IMR-90 (cell line): ENCODE measurements at regions of chr13 and their contacts with region 1.

Region 1: GRCh38 chr13:31945202-31945978 is 86.2 kb upstream of the FRY start:
- DNase-seq: peak; percentile 81
- ATAC-seq: peak; percentile 67
- H3K4me3 ChIP-seq: peak overlapping the region; percentile 7; the same call in 1 of the 2 replicates
- H3K27ac ChIP-seq: peak overlapping the region; percentile 75; the same call in 1 of the 2 replicates
- H3K4me1 ChIP-seq: peaks cover 20% of the 10 kb centered on the region
- H3K27me3 ChIP-seq: no peaks in the 10 kb centered on the region
- CTCF ChIP-seq: no peak
- POLR2A ChIP-seq: no peak
- RAD21 ChIP-seq: no peak

Region 2: DNA sequence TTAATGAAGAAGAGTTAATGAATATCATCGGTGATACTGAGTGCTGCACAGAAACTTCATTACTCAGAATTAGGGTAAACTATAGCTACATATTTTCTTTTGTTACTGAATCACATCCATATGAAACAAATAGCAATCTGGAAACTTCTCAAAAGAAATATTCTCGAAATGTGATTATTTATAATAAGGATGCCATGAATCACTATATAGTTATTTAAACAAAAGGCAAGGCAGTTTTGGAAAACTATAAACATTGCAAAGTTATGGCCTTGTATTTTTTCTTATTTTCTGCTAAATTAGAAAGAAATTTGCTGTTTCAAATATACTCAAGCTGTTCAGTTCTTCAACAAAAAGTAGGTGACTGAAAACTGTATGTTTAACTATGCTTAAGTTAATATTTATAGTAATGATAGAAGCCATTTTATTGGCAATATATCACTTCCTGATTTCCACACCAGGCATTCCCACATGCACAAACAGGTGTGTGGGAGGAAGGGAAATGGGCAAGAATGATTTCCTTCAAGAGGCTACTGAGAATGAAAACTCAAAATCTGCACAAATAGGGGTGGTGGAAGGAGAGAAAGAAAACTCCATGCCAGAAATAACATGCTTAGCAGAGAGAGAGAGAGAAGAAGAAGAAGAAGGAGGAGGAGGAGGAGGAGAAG is 11.7 kb after region 1 on chr13:
- CTCF ChIA-PET with region 1: interaction called, 13 read pairs
- POLR2A ChIA-PET with region 1: no interaction called
- dilution Hi-C with region 1: no loop called
- in situ Hi-C with region 1: no loop called
- intact Hi-C with region 1: no loop called
- DNase-seq: peak; percentile 65
- ATAC-seq: peak; percentile 81
- H3K4me3 ChIP-seq: no peak overlapping the region
- H3K27ac ChIP-seq: peak overlapping the region; percentile 88; the same call in 1 of the 2 replicates
- H3K4me1 ChIP-seq: peaks cover 6% of the 10 kb centered on the region; the same call in 1 of the 2 replicates
- H3K27me3 ChIP-seq: no peaks in the 10 kb centered on the region
- CTCF ChIP-seq: no peak
- POLR2A ChIP-seq: no peak
- RAD21 ChIP-seq: no peak

Region 3: DNA sequence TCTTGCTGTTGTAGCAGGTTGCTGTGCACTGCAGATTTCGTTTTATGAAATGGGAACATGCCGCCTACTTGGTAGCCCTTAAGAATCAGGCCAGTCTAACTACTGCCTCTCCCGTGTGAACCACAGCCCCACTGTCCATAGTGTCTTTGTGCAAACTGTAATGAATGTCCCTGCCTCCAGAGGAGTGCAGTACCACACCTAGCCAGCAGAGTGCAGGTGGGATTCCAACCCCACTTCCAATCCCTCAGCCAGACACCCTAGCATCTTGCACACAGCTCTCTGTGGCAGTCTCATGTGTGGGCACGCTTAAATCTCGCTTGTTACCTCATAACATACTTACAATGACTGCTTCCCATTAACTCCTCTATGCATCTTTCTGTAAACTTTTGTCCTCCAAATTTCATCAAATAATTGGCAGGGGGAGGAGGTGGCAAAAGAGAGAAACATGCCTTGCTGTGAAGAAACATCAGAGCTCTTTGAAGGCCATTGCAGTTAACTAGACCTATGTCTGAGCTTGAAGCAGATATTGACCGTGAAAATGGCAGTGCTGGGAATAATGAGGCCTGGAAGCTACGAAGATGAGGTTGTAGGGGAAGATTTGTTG is 322.5 kb after region 1 on chr13:
- CTCF ChIA-PET with region 1: no interaction called
- POLR2A ChIA-PET with region 1: no interaction called
- dilution Hi-C with region 1: no loop called
- in situ Hi-C with region 1: no loop called
- intact Hi-C with region 1: no loop called
- DNase-seq: no peak
- ATAC-seq: 0 out of 2 replicates have a peak, but pooled peaks have one; percentile 24
- H3K4me3 ChIP-seq: no peak overlapping the region
- H3K27ac ChIP-seq: no peak overlapping the region
- H3K4me1 ChIP-seq: peaks cover 4% of the 10 kb centered on the region; the same call in 1 of the 2 replicates
- H3K27me3 ChIP-seq: no peaks in the 10 kb centered on the region
- CTCF ChIP-seq: peak; percentile 25; the same call in 1 of the 2 replicates
- POLR2A ChIP-seq: no peak
- RAD21 ChIP-seq: peak; percentile 32